ENCODE measurements at regions of chr1 and their contacts with region 1.

Region 1: GRCh38 chr1:88877382-88877825 is 14.0 kb downstream of the GTF2B start:
- DNase-seq: no peak
- H3K4me3 ChIP-seq: no peak overlapping the region
- H3K27ac ChIP-seq: no peak overlapping the region
- H3K4me1 ChIP-seq: no peaks in the 10 kb centered on the region
- H3K27me3 ChIP-seq: no peaks in the 10 kb centered on the region
- CTCF ChIP-seq: peak in 2 of 3 experiments; percentile 30 to 31; a peak in 2 of 4 replicates
- EP300 ChIP-seq: no peak
- POLR2A ChIP-seq: no peak
- RAD21 ChIP-seq: peak in 1 of 2 experiments; percentile 46

Region 2: DNA sequence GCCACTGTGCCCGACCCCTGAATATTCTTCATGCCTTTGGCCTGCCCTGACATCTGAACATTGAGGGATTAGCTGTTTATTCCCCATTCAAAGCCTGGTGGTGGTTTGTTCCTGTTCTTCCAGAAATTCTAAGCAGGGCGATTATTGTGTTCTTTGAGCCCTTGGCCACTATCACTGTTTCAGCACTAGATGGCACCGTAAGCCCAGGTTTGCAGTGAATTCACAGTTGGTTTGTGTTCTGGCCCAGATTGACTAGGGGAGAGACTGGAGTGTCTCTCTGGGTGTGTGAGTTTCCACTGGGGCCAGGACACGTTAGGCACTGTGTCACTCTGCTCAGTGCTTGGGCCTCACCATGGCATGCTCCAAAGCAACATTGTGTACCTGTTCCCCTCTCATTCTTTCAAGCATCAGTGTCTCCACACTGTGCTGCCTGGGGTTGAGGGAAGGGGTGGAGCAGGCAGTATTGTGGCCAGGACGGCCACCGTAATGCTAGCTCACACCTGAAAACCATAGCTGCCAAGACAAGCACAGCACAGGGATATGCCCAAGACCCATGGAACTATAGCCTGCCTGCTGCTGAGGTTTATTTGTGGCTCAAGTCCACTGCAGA is 140.7 kb before region 1 on chr1:
- CTCF ChIA-PET with region 1: interaction called, 57 read pairs
- POLR2A ChIA-PET with region 1: interaction called, 3 read pairs
- DNase-seq: peak; percentile 25 to 71
- H3K4me3 ChIP-seq: no peak overlapping the region
- H3K27ac ChIP-seq: no peak overlapping the region
- H3K4me1 ChIP-seq: peaks cover 0 to 10% (median 7%) of the 10 kb centered on the region in 4 experiments; a peak in 3 of 7 replicates
- H3K27me3 ChIP-seq: no peaks in the 10 kb centered on the region
- CTCF ChIP-seq: peak; percentile 47 to 92 (median 88)
- EP300 ChIP-seq: no peak
- POLR2A ChIP-seq: no peak
- RAD21 ChIP-seq: peak; percentile 98

Region 3: DNA sequence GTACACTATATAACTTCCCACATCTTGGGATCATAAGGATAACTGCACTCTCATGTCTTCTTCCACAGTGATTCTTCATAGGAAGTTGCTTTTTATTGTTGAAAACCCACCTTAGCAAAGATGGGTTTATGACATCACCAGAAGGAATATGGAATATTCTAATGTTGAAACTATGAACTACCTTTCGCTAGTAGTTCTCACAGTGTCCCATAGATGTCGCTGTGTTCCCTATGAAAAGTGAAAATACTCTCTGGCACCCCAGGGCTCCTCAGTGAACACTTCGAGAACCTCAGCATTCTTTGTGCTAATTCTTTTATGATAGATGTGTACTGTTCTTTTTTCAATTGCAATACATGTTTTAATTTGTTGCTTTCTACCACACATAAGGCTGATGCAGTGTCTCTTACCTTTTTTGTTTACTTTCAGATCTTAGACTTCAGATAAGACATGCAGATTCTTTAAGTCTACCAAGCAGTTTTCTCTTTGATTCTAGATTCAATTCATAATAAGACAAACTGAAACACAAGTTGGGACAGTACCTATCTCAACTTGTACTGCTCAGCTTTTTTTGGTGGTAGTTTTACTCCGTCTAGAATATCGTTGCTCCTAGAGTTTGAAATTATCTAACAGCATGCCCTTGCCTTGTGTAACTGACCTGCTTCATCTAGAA is 76.9 kb before region 1 on chr1:
- CTCF ChIA-PET with region 1: interaction called, 11 read pairs
- POLR2A ChIA-PET with region 1: no interaction called
- DNase-seq: peak in 1 of 2 experiments; percentile 58
- H3K4me3 ChIP-seq: no peak overlapping the region
- H3K27ac ChIP-seq: no peak overlapping the region
- H3K4me1 ChIP-seq: no peaks in the 10 kb centered on the region
- H3K27me3 ChIP-seq: no peaks in the 10 kb centered on the region
- CTCF ChIP-seq: peak in 2 of 3 experiments; percentile 51 to 80; a peak in 2 of 4 replicates
- EP300 ChIP-seq: no peak
- POLR2A ChIP-seq: no peak
- RAD21 ChIP-seq: peak; percentile 50 to 61

Region 4: GRCh38 chr1:88847643-88848042 is 29.8 kb before region 1 on chr1:
- CTCF ChIA-PET with region 1: interaction called, 33 read pairs
- POLR2A ChIA-PET with region 1: no interaction called
- DNase-seq: no peak
- H3K4me3 ChIP-seq: no peak overlapping the region
- H3K27ac ChIP-seq: no peak overlapping the region
- H3K4me1 ChIP-seq: no peaks in the 10 kb centered on the region
- H3K27me3 ChIP-seq: no peaks in the 10 kb centered on the region
- CTCF ChIP-seq: no peak
- EP300 ChIP-seq: no peak
- POLR2A ChIP-seq: no peak
- RAD21 ChIP-seq: no peak

Region 5: DNA sequence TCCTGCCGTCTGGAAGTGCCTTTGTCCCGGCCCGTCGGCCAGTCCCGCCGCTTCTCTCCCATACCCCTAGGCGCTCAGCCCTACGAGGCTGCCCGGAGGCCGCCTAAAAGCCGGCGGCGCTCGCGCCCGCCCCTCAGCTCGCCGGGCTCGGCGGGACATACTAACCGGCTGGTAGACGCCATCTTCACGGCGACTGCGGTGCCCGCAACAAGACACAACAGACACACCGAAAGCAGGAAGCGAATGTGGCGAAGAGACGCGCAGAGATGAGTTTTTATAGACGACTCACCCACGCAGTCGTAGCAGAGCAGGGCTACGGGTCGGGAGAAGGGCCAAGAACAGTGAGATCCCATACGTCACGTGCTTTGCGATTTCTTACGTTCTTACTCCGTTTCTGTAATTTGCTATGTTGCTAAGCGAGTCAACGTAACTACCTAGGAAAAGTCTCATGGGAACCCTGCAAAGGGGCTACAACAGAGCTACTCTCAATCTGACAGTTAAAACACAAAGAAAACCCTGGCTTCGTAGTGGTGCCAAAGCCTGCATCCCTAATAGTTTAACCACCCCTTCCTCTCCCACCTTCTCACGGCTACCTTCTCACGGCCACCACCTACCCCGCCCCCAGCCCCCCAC is 14.0 kb after region 1 on chr1 and contains the start of gene GTF2B:
- CTCF ChIA-PET with region 1: interaction called, 68 read pairs
- POLR2A ChIA-PET with region 1: interaction called, 4 read pairs
- DNase-seq: peak; percentile 54 to 84
- H3K4me3 ChIP-seq: peak within 1 kb of the TSS; percentile 76 to 88 (median 79)
- H3K27ac ChIP-seq: peak within 1 kb of the TSS; percentile 46
- H3K4me1 ChIP-seq: peaks cover 0 to 4% (median 3%) of the 10 kb centered on the region in 4 experiments; a peak in 3 of 7 replicates
- H3K27me3 ChIP-seq: no peaks in the 10 kb centered on the region
- CTCF ChIP-seq: no peak; a peak in 1 of 4 replicates
- EP300 ChIP-seq: 0 out of 3 replicates have a peak, but pooled peaks of 1 of the 2 experiments have one; percentile 55
- POLR2A ChIP-seq: peak; percentile 78 to 90
- RAD21 ChIP-seq: no peak
- total RNA-seq, gene GTF2B: 13.5 and 15.6 TPM in 2 replicates

Measured in H1 (cell line).